A673 (cell line): ENCODE measurements at regions of chr1 and their contacts with region 1.

Region 1: DNA sequence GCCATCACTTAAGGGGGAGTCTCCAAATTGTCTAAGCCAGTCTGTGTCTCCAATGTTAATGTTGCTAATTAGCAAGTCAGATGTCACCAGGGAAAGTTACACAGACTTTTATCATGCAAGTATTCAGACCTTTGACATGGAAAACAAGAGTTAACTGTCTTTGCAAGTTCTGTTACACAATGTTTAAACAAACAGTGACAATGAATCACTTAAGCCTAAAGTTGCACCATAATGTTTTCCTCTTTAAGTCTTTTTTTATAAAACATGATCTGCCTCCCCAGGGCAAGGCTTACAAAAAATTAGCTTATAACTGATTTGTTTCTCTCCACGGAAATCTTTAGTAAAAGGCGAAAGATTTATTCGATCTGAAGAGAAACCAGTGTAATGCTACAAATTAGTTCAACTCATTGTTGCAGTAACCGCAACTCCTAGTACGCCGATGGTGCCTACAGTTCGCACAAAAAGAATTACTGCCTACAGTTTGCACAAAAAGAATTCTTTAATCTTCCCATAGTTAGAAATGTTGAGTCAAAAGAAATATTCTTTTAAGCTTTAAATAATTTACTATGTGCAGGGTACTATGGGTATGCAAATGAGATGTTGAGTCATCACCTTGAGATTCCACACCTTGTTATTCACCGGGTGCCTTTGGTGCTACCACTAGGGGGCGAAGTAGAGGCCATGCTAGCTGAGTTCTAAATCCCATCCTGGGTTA is 45.3 kb downstream of the HHAT start:
- DNase-seq: peak; percentile 95
- H3K4me3 ChIP-seq: no peak overlapping the region
- H3K27ac ChIP-seq: peak overlapping the region; percentile 68
- H3K4me1 ChIP-seq: peaks cover 20% of the 10 kb centered on the region
- H3K27me3 ChIP-seq: no peaks in the 10 kb centered on the region
- CTCF ChIP-seq: peak; percentile 95

Region 2: DNA sequence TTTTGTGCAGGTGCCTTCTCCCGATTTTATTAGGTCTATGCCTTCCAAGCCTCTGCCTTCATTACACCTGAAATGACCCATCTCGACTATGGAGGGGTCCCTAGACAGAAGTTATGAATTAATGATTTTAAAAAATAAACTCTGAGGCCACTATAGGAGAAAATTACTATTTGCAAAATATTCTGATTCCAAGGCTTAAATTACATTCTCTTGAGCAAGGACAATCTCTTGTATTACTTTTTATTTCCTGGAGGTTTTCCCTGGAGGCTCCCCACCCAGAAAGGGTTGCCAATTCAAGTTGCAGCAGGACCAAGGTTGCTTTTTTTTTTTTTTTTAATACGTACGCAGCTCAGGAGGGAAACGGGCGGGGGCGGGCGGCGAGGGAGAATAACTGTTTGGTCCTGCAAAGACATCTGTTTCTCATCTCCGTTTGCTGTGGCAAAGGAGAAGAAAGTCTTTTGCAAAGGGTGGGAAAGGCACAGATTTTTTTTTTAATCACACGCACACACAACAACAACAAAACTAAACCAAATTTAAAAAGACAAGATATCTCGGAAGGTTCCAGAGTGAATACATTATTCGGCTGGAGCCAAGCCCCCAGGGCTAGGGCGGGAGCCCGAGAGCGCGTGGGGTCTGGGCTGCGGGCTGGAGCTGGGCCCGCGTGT is 142.1 kb before region 1 on chr1:
- CTCF ChIA-PET with region 1: no interaction called
- POLR2A ChIA-PET with region 1: interaction called, 10 read pairs
- intact Hi-C with region 1: no loop called
- DNase-seq: peak; percentile 81
- H3K4me3 ChIP-seq: peak overlapping the region; percentile 62
- H3K27ac ChIP-seq: no peak overlapping the region
- H3K4me1 ChIP-seq: peaks cover 40% of the 10 kb centered on the region
- H3K27me3 ChIP-seq: peaks cover 31% of the 10 kb centered on the region
- CTCF ChIP-seq: no peak

Region 3: GRCh38 chr1:210360852-210361477 is 13.1 kb before region 1 on chr1:
- CTCF ChIA-PET with region 1: interaction called, 19 read pairs
- POLR2A ChIA-PET with region 1: no interaction called
- intact Hi-C with region 1: no loop called
- DNase-seq: peak; percentile 68
- H3K4me3 ChIP-seq: no peak overlapping the region
- H3K27ac ChIP-seq: no peak overlapping the region
- H3K4me1 ChIP-seq: peaks cover 11% of the 10 kb centered on the region
- H3K27me3 ChIP-seq: no peaks in the 10 kb centered on the region
- CTCF ChIP-seq: peak; percentile 77